ENCODE measurements at regions of chr1 and their contacts with region 1.

Region 1: DNA sequence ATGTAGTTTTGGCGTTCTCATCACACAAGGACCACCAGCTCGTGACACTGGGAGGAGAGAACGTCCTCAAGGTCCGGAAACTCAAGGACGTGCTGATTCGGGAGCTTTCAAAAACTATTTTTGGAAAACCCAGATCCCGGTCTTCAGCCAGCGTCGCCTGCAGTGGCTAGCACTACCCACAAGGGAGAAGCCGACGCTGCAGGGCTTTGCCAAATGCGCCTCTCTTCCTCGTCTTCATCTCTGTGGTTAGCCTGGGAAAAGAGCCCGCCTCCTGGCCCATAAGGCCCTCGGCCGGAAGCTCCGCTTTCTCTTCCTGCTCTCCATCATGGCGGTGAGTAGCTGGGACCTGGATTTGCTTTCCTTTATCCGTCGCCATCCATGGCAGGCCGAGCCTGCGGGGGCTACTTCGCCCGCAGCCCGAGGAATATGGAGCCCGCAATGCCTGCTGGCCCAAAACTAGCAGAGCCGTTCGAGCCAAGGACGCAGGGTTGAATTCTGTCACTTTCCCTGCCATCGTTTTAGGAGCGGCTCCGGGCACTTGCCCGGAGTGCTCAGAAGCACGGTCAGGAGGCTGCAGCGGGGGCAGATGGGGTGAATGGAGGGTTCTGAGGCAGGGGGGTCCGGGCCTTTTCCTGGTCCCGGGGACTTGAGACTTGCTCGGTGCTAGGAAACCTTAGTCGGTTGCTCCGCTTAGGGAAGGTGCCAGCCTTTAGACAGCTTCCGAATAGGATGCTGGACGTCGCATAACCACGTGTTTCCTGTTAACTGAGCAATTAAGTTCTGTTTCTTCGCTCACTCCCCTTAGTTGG is at the start of gene RPL11:
- DNase-seq: peak; percentile 97
- total RNA-seq, gene RPL11: 521 TPM

Region 2: DNA sequence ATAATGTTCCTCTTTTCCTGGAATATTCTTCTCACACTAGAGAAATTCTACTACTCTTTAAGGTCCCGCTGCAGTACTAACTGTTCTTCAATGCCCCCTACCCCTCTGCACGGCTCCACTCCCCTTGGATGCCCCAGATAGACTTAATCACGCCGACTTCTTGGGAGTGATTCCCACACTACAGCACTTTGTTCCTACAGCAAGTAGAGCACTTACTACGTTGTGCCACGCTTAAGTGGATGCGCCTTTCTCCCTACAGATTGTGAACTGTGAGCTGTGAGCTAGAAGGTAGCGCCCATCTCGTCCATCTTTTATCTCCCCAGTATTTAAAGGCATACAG is 324.3 kb before region 1 on chr1:
- intact Hi-C with region 1: no loop called
- DNase-seq: no peak

Region 3: GRCh38 chr1:23489842-23490241 is 201.9 kb before region 1 on chr1:
- intact Hi-C with region 1: no loop called
- DNase-seq: no peak

Region 4: DNA sequence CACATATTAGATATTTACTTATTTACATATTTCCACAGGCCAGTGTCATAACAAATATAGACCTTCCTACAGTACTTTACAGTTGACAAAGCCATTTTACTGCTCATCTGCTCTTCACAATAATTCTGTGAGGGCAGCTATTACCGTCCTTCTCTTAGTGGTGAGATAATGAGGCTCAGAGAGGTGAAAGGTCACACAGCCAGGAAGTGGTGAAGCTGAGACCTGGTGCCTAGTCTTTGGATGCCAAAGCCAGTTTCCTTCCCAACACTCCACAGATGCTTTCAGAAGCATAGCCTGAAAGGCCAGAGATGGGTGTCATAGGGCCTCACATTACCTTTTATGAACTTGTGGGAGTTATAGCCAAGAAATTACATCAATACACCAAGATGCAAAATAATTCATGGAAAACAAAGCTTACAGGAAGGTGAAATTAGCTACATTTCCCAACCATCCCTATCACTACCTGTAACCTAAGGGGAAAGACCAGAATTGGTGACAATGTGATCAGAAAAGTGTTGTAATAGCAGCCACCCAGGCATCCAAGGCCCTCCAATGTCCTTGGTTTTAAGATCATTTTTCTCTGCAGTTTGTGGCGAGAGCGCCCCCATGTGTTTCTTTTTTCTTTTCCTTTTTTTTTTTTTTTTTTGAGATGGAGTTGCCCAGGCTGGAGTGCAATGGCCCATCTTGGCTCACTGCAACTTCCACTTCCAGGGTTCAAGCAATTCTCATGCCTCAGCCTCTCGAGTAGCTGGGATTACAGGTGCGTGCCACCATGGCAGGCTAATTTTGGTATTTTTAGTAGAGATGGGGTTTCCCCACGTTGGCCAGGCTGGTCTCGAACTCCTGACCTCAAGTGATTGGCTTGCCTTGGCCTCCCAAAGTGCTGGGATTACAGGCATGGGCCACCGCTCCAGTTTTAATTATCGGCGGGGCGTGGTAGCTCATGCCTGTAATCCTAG is 26.6 kb before region 1 on chr1:
- intact Hi-C with region 1: no loop called
- DNase-seq: no peak

Region 5: GRCh38 chr1:23743287-23744052 is 51.8 kb after region 1 on chr1 and contains the start of gene ELOA:
- intact Hi-C with region 1: loop called (anchors 2 kb)
- DNase-seq: peak; percentile 91
- total RNA-seq, gene ELOA: 28.8 TPM